ENCODE measurements at regions of chr3 and their contacts with region 1.

Region 1: GRCh38 chr3:134126153-134126552 is 96.4 kb upstream of the SLCO2A1 start:
- DNase-seq: no peak
- H3K4me3 ChIP-seq: no peak overlapping the region
- H3K4me3 Mint-ChIP-seq: no peak overlapping the region
- H3K27ac Mint-ChIP-seq: no peak overlapping the region
- H3K4me1 ChIP-seq: peaks cover 8% of the 10 kb centered on the region; the same call in 1 of the 2 replicates
- H3K4me1 Mint-ChIP-seq: peaks cover 9% of the 10 kb centered on the region
- H3K27me3 ChIP-seq: no peaks in the 10 kb centered on the region
- H3K27me3 Mint-ChIP-seq: no peaks in the 10 kb centered on the region
- CTCF ChIP-seq: peak in 1 of 2 experiments; percentile 19

Region 2: DNA sequence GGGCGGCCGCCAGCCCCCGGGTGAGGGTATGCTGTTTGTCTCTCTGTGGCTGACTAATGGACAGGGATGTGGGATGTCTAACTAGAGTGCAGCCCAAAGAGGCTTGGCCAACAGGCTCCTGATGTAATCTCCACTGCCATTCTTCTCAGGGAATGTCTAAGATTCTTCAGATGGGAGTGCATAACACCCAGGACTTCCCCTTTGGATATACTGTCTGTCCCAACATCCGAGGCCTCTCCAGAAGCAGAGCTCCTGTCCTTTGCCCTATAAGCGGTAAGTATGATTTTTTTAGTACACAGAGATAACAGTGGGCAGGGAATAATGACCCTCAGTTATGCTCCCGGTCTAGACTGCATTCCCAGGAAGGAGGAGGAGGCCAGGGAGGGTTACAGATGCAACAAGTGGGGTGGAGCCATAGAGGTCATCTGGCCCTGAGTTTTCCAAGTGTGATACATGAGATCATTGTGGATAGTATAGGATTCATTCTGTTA is 33.9 kb before region 1 on chr3:
- CTCF ChIA-PET with region 1: no interaction called
- POLR2A ChIA-PET with region 1: no interaction called
- intact Hi-C with region 1: loop called (anchors 1 kb)
- DNase-seq: peak; percentile 46 to 83
- H3K4me3 ChIP-seq: no peak overlapping the region
- H3K4me3 Mint-ChIP-seq: peak overlapping the region; percentile 7
- H3K27ac Mint-ChIP-seq: peak overlapping the region; percentile 39
- H3K4me1 ChIP-seq: peaks cover 10% of the 10 kb centered on the region
- H3K4me1 Mint-ChIP-seq: peaks cover 12% of the 10 kb centered on the region
- H3K27me3 ChIP-seq: no peaks in the 10 kb centered on the region
- H3K27me3 Mint-ChIP-seq: no peaks in the 10 kb centered on the region
- CTCF ChIP-seq: no peak

Region 3: GRCh38 chr3:134179508-134179907 is 53.4 kb after region 1 on chr3:
- CTCF ChIA-PET with region 1: no interaction called
- POLR2A ChIA-PET with region 1: no interaction called
- intact Hi-C with region 1: no loop called
- DNase-seq: no peak
- H3K4me3 ChIP-seq: no peak overlapping the region
- H3K4me3 Mint-ChIP-seq: no peak overlapping the region
- H3K27ac Mint-ChIP-seq: peak overlapping the region; percentile 22
- H3K4me1 ChIP-seq: no peaks in the 10 kb centered on the region
- H3K4me1 Mint-ChIP-seq: peaks cover 7% of the 10 kb centered on the region
- H3K27me3 ChIP-seq: no peaks in the 10 kb centered on the region
- H3K27me3 Mint-ChIP-seq: no peaks in the 10 kb centered on the region
- CTCF ChIP-seq: no peak

Region 4: GRCh38 chr3:134430950-134431445 is 304.8 kb after region 1 on chr3:
- CTCF ChIA-PET with region 1: no interaction called
- POLR2A ChIA-PET with region 1: no interaction called
- intact Hi-C with region 1: no loop called
- DNase-seq: no peak
- H3K4me3 ChIP-seq: no peak overlapping the region
- H3K4me3 Mint-ChIP-seq: no peak overlapping the region
- H3K27ac Mint-ChIP-seq: no peak overlapping the region
- H3K4me1 ChIP-seq: no peaks in the 10 kb centered on the region
- H3K4me1 Mint-ChIP-seq: no peaks in the 10 kb centered on the region
- H3K27me3 ChIP-seq: no peaks in the 10 kb centered on the region
- H3K27me3 Mint-ChIP-seq: peaks cover 2% of the 10 kb centered on the region
- CTCF ChIP-seq: no peak

Region 5: DNA sequence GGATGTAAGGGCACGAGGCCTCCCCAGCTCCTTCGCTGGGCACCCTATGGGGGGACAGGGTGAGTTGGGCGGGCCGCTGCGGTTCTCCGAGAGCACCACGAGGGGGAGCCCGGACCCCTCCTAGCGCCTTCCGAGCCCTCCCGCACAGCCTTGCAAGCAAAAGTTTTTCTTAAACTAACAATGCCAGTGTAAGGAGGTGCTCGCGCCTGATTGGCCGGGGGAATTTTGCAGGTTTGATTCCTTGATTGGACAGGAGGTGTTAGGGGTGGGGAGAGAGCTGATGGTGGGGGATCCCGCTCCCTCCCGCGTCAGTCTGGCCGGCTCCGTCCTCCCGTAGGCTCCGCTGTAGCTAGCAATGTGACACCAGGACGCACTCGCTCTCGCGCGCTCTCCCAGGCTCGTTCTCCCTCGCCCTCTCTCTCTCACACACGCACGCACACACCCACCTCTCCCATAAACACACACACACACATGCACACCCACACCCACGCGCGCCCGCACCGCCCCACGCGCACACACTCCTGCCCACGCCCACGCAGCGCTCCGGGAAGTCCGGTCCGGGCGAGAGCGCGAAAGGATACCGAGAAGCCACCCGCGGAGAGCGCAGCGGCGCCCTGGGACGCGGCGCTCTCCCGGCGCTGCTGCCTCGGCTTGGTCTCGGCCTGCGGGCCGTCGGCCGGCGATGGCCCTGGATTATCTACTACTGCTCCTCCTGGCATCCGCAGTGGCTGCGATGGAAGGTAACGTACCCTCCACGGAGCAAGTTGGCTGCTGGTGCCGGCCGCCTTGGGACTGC is 669.0 kb after region 1 on chr3 and contains the start of gene EPHB1:
- CTCF ChIA-PET with region 1: no interaction called
- POLR2A ChIA-PET with region 1: no interaction called
- intact Hi-C with region 1: no loop called
- DNase-seq: peak; percentile 83 to 88
- H3K4me3 ChIP-seq: peak within 1 kb of the TSS; percentile 53
- H3K4me3 Mint-ChIP-seq: peak within 1 kb of the TSS; percentile 96
- H3K27ac Mint-ChIP-seq: no peak within 1 kb of the TSS
- H3K4me1 ChIP-seq: no peaks in the 10 kb centered on the region; the same call in 1 of the 2 replicates
- H3K4me1 Mint-ChIP-seq: no peaks in the 10 kb centered on the region
- H3K27me3 ChIP-seq: peaks cover 3% of the 10 kb centered on the region
- H3K27me3 Mint-ChIP-seq: peaks cover 21% of the 10 kb centered on the region
- CTCF ChIP-seq: peak; percentile 86 to 94
- total RNA-seq, gene EPHB1: 2.3 and 4.6 TPM in 2 replicates

Measured in Caco-2 (cell line).